ENCODE measurements at regions of chr3 and their contacts with region 1.

Region 1: GRCh38 chr3:196179380-196180308 is 31.6 kb downstream of the ZDHHC19 start:
- DNase-seq: peak; percentile 82
- H3K4me3 Mint-ChIP-seq: peak overlapping the region; percentile 74
- H3K27ac Mint-ChIP-seq: peak overlapping the region; percentile 97
- H3K4me1 Mint-ChIP-seq: peaks cover 61% of the 10 kb centered on the region
- H3K27me3 Mint-ChIP-seq: no peaks in the 10 kb centered on the region

Region 2: GRCh38 chr3:196073188-196073838 is 106.3 kb before region 1 on chr3:
- intact Hi-C with region 1: loop called (anchors 1 kb)
- DNase-seq: peak; percentile 60
- H3K4me3 Mint-ChIP-seq: peak overlapping the region; percentile 24
- H3K27ac Mint-ChIP-seq: peak overlapping the region; percentile 79
- H3K4me1 Mint-ChIP-seq: peaks cover 63% of the 10 kb centered on the region
- H3K27me3 Mint-ChIP-seq: no peaks in the 10 kb centered on the region

Region 3: GRCh38 chr3:196111939-196112386 is 67.7 kb before region 1 on chr3:
- intact Hi-C with region 1: loop called (anchors 1 kb)
- DNase-seq: peak; percentile 37
- H3K4me3 Mint-ChIP-seq: peak overlapping the region; percentile 47
- H3K27ac Mint-ChIP-seq: peak overlapping the region; percentile 96
- H3K4me1 Mint-ChIP-seq: peaks cover 27% of the 10 kb centered on the region
- H3K27me3 Mint-ChIP-seq: no peaks in the 10 kb centered on the region

Region 4: DNA sequence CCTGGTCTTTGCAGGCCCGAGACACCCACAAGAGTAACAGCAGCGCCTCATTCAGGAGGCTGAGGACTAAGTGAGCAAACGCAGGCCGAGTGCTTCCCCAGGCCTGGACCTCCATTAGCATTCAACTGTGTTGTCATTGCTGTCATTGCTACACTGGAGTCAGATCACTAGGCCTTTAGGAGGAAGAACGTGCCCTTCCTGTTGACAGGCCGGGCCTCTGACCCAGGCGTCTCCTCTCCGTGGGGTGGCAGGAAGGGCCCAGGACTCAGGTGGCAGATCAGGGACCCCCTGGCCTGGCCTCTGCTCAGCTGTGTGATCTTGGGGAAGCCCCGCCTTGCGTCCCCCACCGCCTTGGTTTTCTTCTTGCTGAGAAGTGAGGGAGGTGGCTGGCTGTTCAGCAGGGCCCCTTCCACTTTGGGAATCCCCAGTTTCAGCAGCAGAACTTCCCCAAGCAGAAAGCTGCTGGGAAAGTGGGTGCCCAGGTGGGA is 12.4 kb after region 1 on chr3:
- intact Hi-C with region 1: loop called (anchors 1 kb)
- DNase-seq: peak; percentile 49
- H3K4me3 Mint-ChIP-seq: peak overlapping the region; percentile 75
- H3K27ac Mint-ChIP-seq: peak overlapping the region; percentile 98
- H3K4me1 Mint-ChIP-seq: peaks cover 47% of the 10 kb centered on the region
- H3K27me3 Mint-ChIP-seq: no peaks in the 10 kb centered on the region

Region 5: DNA sequence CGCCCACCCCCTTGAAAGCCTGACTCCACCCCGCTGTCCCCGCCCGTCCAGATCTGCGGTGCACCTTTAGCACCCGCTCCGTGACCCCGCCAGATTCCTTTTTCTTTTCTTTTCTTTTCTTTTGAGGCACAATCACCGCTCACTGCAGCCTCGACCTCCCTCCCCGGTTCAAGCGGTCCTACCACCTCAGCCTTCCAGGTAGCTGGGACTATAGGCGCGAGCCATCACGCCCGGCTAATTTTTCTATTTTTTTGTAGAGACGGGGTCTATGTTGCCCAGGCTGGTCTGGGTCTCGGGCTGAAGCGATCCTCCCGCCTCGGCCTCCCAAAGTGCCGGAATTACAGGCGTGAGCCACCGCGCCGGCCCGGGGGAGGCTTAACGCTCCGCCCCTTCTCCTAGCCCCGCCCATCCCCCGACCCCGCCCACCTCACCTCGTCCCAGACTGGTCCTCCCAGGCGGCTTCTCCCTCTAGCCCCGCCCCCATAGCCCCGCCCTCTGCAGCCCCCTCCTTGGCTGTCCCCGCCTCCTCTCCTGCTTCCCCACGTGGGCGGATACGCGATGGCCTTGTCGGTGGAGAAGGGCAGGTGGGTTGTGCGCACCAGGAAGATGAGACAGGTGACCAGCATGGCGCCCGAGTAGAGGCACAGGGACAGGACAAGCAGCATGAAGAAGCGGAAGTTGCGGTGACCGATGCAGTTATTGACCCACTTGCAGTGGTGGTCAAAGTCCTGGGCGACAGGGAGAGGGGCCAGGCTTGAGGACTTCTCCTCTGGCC is 28.4 kb after region 1 on chr3:
- intact Hi-C with region 1: no loop called
- DNase-seq: no peak
- H3K4me3 Mint-ChIP-seq: peak overlapping the region; percentile 80
- H3K27ac Mint-ChIP-seq: peak overlapping the region; percentile 69
- H3K4me1 Mint-ChIP-seq: peaks cover 4% of the 10 kb centered on the region
- H3K27me3 Mint-ChIP-seq: peaks cover 14% of the 10 kb centered on the region

Measured in activated T-helper 1 cell treated with anti-CD3 and anti-CD28 coated beads, Interleukin-12 subunit alpha, Interleukin-12 subunit beta, Interleukin-2, Interleukin-4 antibody, amounts not matched to agents 30 ng/mL and 10 ng/mL and 1 ng/mL, durations not matched to agents 14 hours and 24 hours and 36 hours (primary cell).